ENCODE measurements at regions of chr12 and their contacts with region 1.

Region 1: GRCh38 chr12:53451661-53452158 is at the start of gene PCBP2:
- DNase-seq: peak; percentile 98
- H3K4me3 ChIP-seq: peak within 1 kb of the TSS; percentile 74 to 80
- H3K27ac ChIP-seq: peak within 1 kb of the TSS; percentile 98
- H3K4me1 ChIP-seq: peaks cover 25% of the 10 kb centered on the region
- H3K27me3 ChIP-seq: no peaks in the 10 kb centered on the region
- CTCF ChIP-seq: peak; percentile 83 to 93 (median 84)
- POLR2A ChIP-seq: peak in 1 of 2 donors; percentile 59
- total RNA-seq, gene PCBP2: 488 TPM

Region 2: GRCh38 chr12:53379389-53380103 is 72.2 kb before region 1 on chr12:
- intact Hi-C with region 1: loop called (anchors 10 kb)
- DNase-seq: peak; percentile 100
- H3K4me3 ChIP-seq: peak overlapping the region; percentile 64 to 93
- H3K27ac ChIP-seq: peak overlapping the region; percentile 100
- H3K4me1 ChIP-seq: peaks cover 37% of the 10 kb centered on the region
- H3K27me3 ChIP-seq: no peaks in the 10 kb centered on the region
- CTCF ChIP-seq: no peak
- POLR2A ChIP-seq: peak in 1 of 2 donors; percentile 92